ENCODE measurements at regions of chr7 and their contacts with region 1.

Region 1: DNA sequence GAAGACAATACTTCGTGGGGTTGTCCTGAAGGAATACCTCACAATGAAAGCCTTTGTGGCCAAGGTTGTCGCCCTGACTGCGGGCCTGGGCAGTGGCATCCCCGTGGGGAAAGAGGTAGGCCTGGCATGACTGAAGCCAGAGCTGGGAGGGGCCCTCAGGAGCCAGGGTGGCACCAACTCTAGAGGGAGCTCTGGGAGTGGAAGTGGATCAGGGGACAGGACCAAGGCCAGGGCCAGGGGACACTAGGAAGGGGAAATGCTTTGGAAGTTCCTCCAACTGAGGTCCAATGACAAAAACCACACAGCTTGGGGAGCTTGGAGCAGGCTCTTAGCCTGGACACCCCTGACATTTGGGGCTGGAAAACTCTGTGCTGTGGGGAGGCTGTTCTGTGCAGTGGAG is 5.8 kb downstream of the CLCN1 start:
- DNase-seq: no peak
- H3K4me3 ChIP-seq: no peak overlapping the region
- H3K27ac ChIP-seq: no peak overlapping the region
- H3K4me1 ChIP-seq: no peaks in the 10 kb centered on the region
- H3K27me3 ChIP-seq: no peaks in the 10 kb centered on the region
- CTCF ChIP-seq: no peak

Region 2: DNA sequence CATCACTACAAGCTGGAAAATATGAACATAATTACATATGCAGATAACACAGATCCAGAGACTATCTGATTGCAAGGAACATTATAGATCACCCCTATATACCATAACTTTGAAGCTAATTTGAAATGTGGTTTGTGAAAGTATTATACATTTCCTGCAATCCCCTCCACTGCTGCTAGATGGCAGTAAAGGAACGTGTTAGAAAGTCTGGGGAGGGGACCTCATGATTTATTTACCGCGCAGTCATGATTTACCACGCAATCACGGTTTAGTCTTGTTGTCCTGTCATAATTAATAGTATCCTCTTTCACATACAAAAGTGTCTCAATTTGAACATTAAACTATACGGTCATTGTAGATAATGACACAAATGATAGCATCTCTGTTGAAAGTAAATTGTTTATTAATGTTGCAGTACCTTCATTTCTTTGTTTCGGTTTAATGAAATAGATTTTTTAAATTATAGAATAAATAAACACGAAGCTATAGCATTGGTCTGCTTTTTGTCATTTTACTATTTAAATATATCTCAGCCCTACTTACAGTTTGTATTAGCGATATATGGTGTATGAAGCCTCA is 717.8 kb before region 1 on chr7:
- CTCF ChIA-PET with region 1: no interaction called
- POLR2A ChIA-PET with region 1: no interaction called
- intact Hi-C with region 1: no loop called
- DNase-seq: peak; percentile 70
- H3K4me3 ChIP-seq: no peak overlapping the region
- H3K27ac ChIP-seq: no peak overlapping the region
- H3K4me1 ChIP-seq: no peaks in the 10 kb centered on the region
- H3K27me3 ChIP-seq: peaks cover 29% of the 10 kb centered on the region
- CTCF ChIP-seq: peak; percentile 85

Region 3: DNA sequence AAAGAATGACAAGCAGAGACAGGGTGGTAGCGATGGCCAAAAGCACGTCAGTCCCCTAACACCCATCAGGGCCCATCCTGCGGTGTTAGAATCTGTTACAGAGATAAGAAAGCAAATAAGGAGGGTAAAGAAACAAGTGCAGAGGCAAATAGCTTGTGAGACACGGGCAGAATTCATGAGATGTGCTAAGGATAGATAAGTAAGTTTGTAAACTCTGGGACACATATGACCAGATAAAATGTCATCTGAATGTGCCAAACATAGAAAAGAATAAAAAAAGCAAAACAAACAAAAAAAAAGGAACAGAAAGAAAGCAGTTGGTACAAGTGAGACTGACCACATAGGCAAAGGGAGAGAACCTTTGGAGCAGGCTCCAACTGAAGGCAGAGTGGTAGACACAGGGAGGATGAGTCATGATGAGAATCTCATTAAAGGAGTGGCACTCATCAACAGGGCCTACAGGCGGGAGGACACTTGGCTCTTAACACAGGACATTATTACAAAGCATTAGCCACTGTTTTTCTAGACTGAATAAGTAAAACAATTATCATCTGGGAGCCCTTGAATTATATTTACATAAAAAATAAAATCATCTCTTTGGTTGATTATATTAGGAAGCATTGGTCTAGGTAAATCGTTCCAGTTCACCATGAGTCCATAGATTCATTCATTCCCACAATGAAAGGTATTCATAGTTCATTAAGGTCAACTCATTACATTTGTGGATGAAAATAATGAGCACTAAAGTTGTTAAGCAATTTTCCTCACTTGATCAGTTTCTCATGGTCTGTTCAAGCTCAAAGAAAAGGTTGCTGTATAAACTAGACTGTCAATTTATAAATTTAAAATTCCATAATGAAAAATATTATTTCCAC is 488.3 kb before region 1 on chr7:
- CTCF ChIA-PET with region 1: no interaction called
- POLR2A ChIA-PET with region 1: no interaction called
- intact Hi-C with region 1: no loop called
- DNase-seq: no peak
- H3K4me3 ChIP-seq: no peak overlapping the region
- H3K27ac ChIP-seq: no peak overlapping the region
- H3K4me1 ChIP-seq: no peaks in the 10 kb centered on the region
- H3K27me3 ChIP-seq: no peaks in the 10 kb centered on the region
- CTCF ChIP-seq: no peak

Region 4: GRCh38 chr7:143341842-143342241 is 20.1 kb after region 1 on chr7:
- CTCF ChIA-PET with region 1: no interaction called
- POLR2A ChIA-PET with region 1: no interaction called
- intact Hi-C with region 1: loop called (anchors 2 kb)
- DNase-seq: no peak
- H3K4me3 ChIP-seq: no peak overlapping the region
- H3K27ac ChIP-seq: no peak overlapping the region
- H3K4me1 ChIP-seq: no peaks in the 10 kb centered on the region
- H3K27me3 ChIP-seq: peaks cover 25% of the 10 kb centered on the region
- CTCF ChIP-seq: no peak